A673 (cell line): ENCODE measurements at regions of chr7 and their contacts with region 1.

Region 1: DNA sequence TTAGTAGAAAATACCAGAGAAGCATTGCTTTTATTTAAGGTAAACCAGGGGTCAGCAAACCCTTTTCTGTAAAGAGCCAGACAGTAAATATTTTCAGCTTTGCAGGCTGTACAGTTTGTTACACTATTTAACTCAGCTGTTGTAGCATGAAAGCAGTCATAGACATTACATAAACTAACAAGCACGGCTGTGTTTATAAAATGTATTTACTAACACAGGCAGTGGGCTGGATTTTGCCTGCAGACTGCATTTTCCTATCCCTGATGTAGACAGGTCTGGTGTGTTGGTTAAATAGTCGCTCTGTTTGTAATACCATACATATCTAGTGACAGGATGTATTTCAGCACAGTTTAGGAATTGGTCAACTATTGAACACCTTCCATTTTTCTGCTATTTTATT is 129.3 kb downstream of the ST7 start:
- DNase-seq: no peak
- H3K4me3 ChIP-seq: no peak overlapping the region
- H3K27ac ChIP-seq: no peak overlapping the region
- H3K4me1 ChIP-seq: peaks cover 6% of the 10 kb centered on the region
- H3K27me3 ChIP-seq: no peaks in the 10 kb centered on the region
- CTCF ChIP-seq: no peak

Region 2: GRCh38 chr7:117152213-117153007 is 69.8 kb after region 1 on chr7:
- CTCF ChIA-PET with region 1: no interaction called
- POLR2A ChIA-PET with region 1: interaction called, 20 read pairs
- intact Hi-C with region 1: no loop called
- DNase-seq: no peak
- H3K4me3 ChIP-seq: no peak overlapping the region
- H3K27ac ChIP-seq: no peak overlapping the region
- H3K4me1 ChIP-seq: no peaks in the 10 kb centered on the region
- H3K27me3 ChIP-seq: no peaks in the 10 kb centered on the region
- CTCF ChIP-seq: no peak